Ovary (tissue), 10 donors: ENCODE measurements at regions of chr2 and their contacts with region 1.

Region 1: GRCh38 chr2:241877989-241878970 is 8.8 kb downstream of the RTP5 start:
- DNase-seq: peak; percentile 72 to 85 (median 82)
- H3K4me3 ChIP-seq: no peak overlapping the region
- H3K27ac ChIP-seq: no peak overlapping the region
- H3K4me1 ChIP-seq: peaks cover 7% of the 10 kb centered on the region
- H3K27me3 ChIP-seq: no peaks in the 10 kb centered on the region
- CTCF ChIP-seq: peak; percentile 40 to 55 (median 55)
- EP300 ChIP-seq: no peak
- POLR2A ChIP-seq: no peak

Region 2: GRCh38 chr2:241734467-241735208 is 143.6 kb before region 1 on chr2 and contains the start of gene D2HGDH:
- intact Hi-C with region 1: loop called in 3 of 4 experiments (anchors 5 to 10 kb)
- DNase-seq: peak; percentile 94 to 97 (median 96)
- H3K4me3 ChIP-seq: peak within 1 kb of the TSS; percentile 68
- H3K27ac ChIP-seq: peak within 1 kb of the TSS; percentile 16 to 77
- H3K4me1 ChIP-seq: peaks cover 6% of the 10 kb centered on the region
- H3K27me3 ChIP-seq: no peaks in the 10 kb centered on the region
- CTCF ChIP-seq: no peak
- EP300 ChIP-seq: no peak
- POLR2A ChIP-seq: peak; percentile 67
- total RNA-seq, gene D2HGDH: 17.1 to 35.1 (median 26.3) TPM

Region 3: DNA sequence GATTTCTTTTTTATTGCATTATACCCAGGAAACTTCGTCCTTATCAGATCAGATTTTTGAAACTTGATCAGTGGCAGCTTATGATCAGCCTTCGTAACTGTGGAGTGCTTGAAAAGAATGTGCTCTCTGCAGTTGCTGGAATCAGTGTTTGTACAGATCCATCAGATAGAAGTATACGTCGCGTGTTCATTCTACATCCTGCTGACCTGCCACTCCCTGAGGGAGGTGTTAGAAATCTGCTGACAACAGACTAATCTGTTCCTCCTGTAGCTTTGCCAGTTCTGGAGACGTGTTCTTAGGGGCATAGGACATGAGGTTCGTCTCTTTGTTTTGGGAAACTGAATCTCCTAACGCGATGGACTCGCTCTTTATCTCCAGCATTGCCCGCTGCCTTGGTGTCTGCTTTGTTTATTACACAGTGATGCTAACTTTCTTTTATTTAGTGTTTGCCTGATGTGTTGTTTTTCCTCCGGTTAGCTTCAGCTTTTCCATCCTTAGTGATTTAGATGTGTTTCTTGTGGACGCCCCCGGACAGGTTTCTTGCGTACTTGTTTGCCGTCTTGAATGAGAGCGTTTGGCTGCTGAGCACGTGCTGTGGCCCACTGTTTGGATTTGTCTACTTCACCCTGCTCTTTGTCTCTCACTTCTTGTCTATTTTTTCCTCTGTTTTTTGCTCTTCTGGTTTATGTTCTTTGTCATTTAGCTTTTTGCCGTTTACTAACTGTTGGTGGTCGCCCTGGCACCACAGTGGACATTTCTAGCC is 119.1 kb before region 1 on chr2:
- intact Hi-C with region 1: loop called in 1 of 4 experiments (anchors 10 kb)
- DNase-seq: peak in 1 of 5 donors; percentile 7
- H3K4me3 ChIP-seq: no peak overlapping the region
- H3K27ac ChIP-seq: no peak overlapping the region
- H3K4me1 ChIP-seq: no peaks in the 10 kb centered on the region
- H3K27me3 ChIP-seq: no peaks in the 10 kb centered on the region
- CTCF ChIP-seq: no peak
- EP300 ChIP-seq: no peak
- POLR2A ChIP-seq: no peak

Region 4: GRCh38 chr2:241924069-241924908 is 46.0 kb after region 1 on chr2:
- intact Hi-C with region 1: no loop called
- DNase-seq: no peak
- H3K4me3 ChIP-seq: no peak overlapping the region
- H3K27ac ChIP-seq: no peak overlapping the region
- H3K4me1 ChIP-seq: peaks cover 5% of the 10 kb centered on the region
- H3K27me3 ChIP-seq: no peaks in the 10 kb centered on the region
- CTCF ChIP-seq: no peak
- EP300 ChIP-seq: no peak
- POLR2A ChIP-seq: no peak